ENCODE measurements at regions of chr9 and their contacts with region 1.

Region 1: DNA sequence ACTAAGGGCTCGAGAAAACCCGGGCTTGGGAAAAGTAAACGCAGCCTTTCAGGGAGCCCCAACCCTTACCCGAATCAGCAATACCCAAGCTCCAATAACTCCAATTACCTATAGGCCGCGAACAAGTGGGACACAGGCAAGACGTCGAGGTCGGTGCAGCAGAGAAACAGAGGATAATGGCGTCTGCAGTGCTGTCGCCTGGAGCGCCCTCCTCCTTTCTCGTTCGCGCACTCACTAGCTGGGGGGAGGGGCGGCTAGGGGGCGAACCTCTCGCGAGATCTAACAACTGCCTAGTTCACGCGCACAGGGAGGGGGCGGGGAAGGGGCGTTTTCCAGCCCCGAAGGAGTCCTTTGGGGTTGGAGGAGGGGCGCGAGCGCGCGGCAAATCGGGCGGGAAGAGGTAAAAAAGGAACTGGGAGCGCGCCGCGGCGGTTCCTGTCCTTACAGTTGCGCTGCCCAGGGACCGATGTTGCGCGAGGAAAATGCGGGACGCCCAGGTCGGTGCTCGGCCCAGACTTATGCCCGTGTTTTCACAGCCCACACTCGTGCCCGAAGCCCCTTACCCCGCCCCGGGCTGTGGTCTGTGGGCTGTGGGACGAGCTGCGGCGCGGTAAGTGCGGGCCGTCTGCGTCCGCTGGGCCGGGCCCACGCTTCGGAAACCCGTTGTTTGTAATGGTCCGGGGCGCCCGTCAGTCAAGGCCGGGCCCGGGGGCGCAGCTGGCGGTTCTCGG is at the start of gene RMI1:
- DNase-seq: peak; percentile 95 to 99 (median 98)
- ATAC-seq: peak; percentile 88
- H3K4me3 ChIP-seq: peak within 1 kb of the TSS; percentile 93
- H3K4me3 Mint-ChIP-seq: peak within 1 kb of the TSS; percentile 91 to 100 (median 99)
- H3K27ac ChIP-seq: peak within 1 kb of the TSS; percentile 99
- H3K27ac Mint-ChIP-seq: peak within 1 kb of the TSS; percentile 97 to 100 (median 99)
- H3K4me1 ChIP-seq: peaks cover 21 to 27% of the 10 kb centered on the region in 2 donors
- H3K4me1 Mint-ChIP-seq: peaks cover 28 to 52% (median 46%) of the 10 kb centered on the region in 7 donors
- H3K27me3 ChIP-seq: no peaks in the 10 kb centered on the region
- H3K27me3 Mint-ChIP-seq: no peaks in the 10 kb centered on the region
- total RNA-seq, gene RMI1: 1.6 to 24.8 (median 5.2) TPM

Region 2: DNA sequence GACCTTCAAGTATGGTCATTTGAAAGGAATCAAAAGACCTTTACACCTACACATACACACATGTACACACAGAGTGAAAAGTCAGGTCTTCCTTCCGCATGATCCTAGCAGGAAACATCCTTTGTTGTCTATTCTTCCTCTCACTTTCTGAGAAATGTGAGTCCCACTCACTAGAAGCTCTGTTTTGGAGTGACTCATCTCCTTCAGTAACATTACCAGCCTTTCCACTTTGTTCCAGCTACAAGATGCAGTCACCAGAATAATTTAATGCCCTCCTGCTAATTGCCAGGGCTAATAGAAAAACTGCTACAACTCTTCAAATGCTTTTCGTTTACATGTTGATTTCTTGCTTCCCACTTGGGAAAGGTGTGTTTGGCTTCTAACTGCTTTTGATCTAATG is 1335.0 kb before region 1 on chr9:
- CTCF ChIA-PET with region 1: no interaction called
- POLR2A ChIA-PET with region 1: no interaction called
- intact Hi-C with region 1: no loop called
- DNase-seq: no peak
- ATAC-seq: no peak
- H3K4me3 ChIP-seq: no peak overlapping the region
- H3K4me3 Mint-ChIP-seq: no peak overlapping the region
- H3K27ac ChIP-seq: no peak overlapping the region
- H3K27ac Mint-ChIP-seq: no peak overlapping the region
- H3K4me1 ChIP-seq: no peaks in the 10 kb centered on the region
- H3K4me1 Mint-ChIP-seq: peaks cover 0 to 1% (median 0%) of the 10 kb centered on the region in 7 donors
- H3K27me3 ChIP-seq: no peaks in the 10 kb centered on the region
- H3K27me3 Mint-ChIP-seq: no peaks in the 10 kb centered on the region

Region 3: GRCh38 chr9:83707768-83708514 is 272.6 kb before region 1 on chr9 and contains the start of gene UBQLN1:
- CTCF ChIA-PET with region 1: no interaction called
- POLR2A ChIA-PET with region 1: interaction called, 34 read pairs
- intact Hi-C with region 1: loop called (anchors 1 kb)
- DNase-seq: peak; percentile 91 to 97 (median 95)
- ATAC-seq: peak; percentile 91
- H3K4me3 ChIP-seq: peak within 1 kb of the TSS; percentile 79
- H3K4me3 Mint-ChIP-seq: peak within 1 kb of the TSS; percentile 81 to 99 (median 87)
- H3K27ac ChIP-seq: peak within 1 kb of the TSS; percentile 93
- H3K27ac Mint-ChIP-seq: peak within 1 kb of the TSS; percentile 95 to 100 (median 100)
- H3K4me1 ChIP-seq: peaks cover 27% of the 10 kb centered on the region in 2 donors
- H3K4me1 Mint-ChIP-seq: peaks cover 30 to 55% (median 49%) of the 10 kb centered on the region in 7 donors
- H3K27me3 ChIP-seq: no peaks in the 10 kb centered on the region
- H3K27me3 Mint-ChIP-seq: peaks cover 0 to 6% (median 0%) of the 10 kb centered on the region in 5 donors
- total RNA-seq, gene UBQLN1: 104 to 139 (median 114) TPM

Region 4: GRCh38 chr9:83956434-83957247 is 23.9 kb before region 1 on chr9:
- CTCF ChIA-PET with region 1: interaction called, 4 read pairs
- POLR2A ChIA-PET with region 1: interaction called, 35 read pairs
- intact Hi-C with region 1: loop called (anchors 1 kb)
- DNase-seq: peak; percentile 25 to 73 (median 42)
- ATAC-seq: peak; percentile 76
- H3K4me3 ChIP-seq: peak overlapping the region; percentile 88
- H3K4me3 Mint-ChIP-seq: peak overlapping the region; percentile 94 to 98 (median 95)
- H3K27ac ChIP-seq: peak overlapping the region; percentile 77
- H3K27ac Mint-ChIP-seq: peak overlapping the region; percentile 88 to 99 (median 94)
- H3K4me1 ChIP-seq: peaks cover 4 to 13% of the 10 kb centered on the region in 2 donors
- H3K4me1 Mint-ChIP-seq: peaks cover 6 to 23% (median 19%) of the 10 kb centered on the region in 7 donors
- H3K27me3 ChIP-seq: no peaks in the 10 kb centered on the region
- H3K27me3 Mint-ChIP-seq: no peaks in the 10 kb centered on the region

Region 5: DNA sequence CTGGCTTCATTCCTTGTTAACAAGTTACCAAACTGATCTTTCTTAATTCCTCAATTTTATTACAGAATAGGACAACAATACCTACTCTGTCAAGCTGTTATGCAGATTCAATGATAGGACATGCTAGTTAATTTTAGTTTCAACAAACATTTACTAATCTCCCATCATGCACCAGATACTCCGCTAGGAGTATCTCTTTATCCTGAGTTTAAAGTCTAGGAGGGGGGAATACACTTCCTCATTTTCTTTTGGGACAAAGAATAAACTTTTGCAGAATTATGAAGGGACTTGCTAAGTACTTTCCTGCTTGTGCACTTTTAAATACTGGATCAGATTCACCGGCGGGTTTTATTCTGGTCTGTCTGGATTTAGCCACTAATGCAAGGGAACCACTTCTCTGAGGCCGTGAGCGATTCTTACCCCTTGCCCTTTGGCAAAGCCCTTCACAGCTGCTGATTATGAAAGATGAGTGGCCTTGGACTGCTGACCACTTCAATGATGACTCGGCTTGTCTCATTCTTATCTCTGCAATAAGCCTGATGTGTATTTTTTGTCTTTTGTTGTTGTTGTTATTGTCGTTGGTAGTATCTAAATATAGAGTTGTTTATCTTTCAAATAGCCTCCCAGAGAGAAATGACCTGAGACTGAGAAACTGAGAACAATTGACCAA is 73.9 kb after region 1 on chr9:
- CTCF ChIA-PET with region 1: no interaction called
- POLR2A ChIA-PET with region 1: no interaction called
- intact Hi-C with region 1: loop called in 1 of 2 experiments (anchors 10 kb)
- DNase-seq: no peak
- ATAC-seq: no peak
- H3K4me3 ChIP-seq: no peak overlapping the region
- H3K4me3 Mint-ChIP-seq: no peak overlapping the region
- H3K27ac ChIP-seq: no peak overlapping the region
- H3K27ac Mint-ChIP-seq: no peak overlapping the region
- H3K4me1 ChIP-seq: no peaks in the 10 kb centered on the region
- H3K4me1 Mint-ChIP-seq: peaks cover 0 to 5% (median 0%) of the 10 kb centered on the region in 7 donors
- H3K27me3 ChIP-seq: no peaks in the 10 kb centered on the region
- H3K27me3 Mint-ChIP-seq: peaks cover 0 to 14% (median 8%) of the 10 kb centered on the region in 5 donors

Region 6: GRCh38 chr9:84187090-84187489 is 206.5 kb after region 1 on chr9:
- CTCF ChIA-PET with region 1: no interaction called
- POLR2A ChIA-PET with region 1: no interaction called
- intact Hi-C with region 1: no loop called
- DNase-seq: no peak
- ATAC-seq: no peak
- H3K4me3 ChIP-seq: no peak overlapping the region
- H3K4me3 Mint-ChIP-seq: no peak overlapping the region
- H3K27ac ChIP-seq: no peak overlapping the region
- H3K27ac Mint-ChIP-seq: no peak overlapping the region
- H3K4me1 ChIP-seq: no peaks in the 10 kb centered on the region
- H3K4me1 Mint-ChIP-seq: no peaks in the 10 kb centered on the region
- H3K27me3 ChIP-seq: no peaks in the 10 kb centered on the region
- H3K27me3 Mint-ChIP-seq: peaks cover 0 to 11% (median 6%) of the 10 kb centered on the region in 5 donors

Region 7: DNA sequence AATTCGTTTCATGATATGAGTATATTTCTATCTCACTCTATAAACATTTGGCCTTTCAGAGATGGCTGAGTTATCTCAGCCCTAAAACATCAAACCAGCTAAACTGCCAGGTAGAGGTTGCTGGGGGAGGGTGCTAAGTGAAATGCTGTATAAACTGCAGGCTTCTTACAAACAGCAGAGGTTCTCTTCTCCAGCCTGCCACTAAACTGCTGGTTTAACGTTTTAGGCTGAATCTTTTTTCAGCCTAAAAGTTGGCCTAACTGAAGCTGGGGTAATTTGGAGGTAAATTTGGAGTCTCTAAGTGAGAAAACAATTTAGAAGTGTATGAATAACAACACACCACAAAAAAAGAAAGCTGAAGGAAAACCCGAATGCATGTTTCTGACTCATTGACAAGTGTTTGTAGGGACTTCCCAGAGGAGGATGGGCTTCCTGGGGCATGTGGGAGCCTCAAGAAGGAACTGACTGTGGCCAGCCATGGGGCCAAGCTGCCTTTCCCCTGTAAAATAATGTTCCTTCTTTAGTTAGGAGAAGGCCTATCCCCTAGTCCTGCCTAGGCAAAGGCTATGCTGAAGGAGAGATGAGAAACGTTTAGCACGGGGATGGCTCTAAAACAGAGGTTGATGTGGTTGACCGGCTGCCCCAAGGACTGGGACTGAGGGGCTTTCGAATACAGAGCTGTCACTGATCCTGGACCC is 315.7 kb after region 1 on chr9:
- CTCF ChIA-PET with region 1: no interaction called
- POLR2A ChIA-PET with region 1: interaction called, 11 read pairs
- intact Hi-C with region 1: loop called in 1 of 2 experiments (anchors 1 kb)
- DNase-seq: peak in 2 of 9 donors; percentile 9 to 61
- ATAC-seq: peak; percentile 79
- H3K4me3 ChIP-seq: no peak overlapping the region
- H3K4me3 Mint-ChIP-seq: peak overlapping the region in 6 of 10 donors; percentile 5 to 71 (median 44)
- H3K27ac ChIP-seq: peak overlapping the region; percentile 6
- H3K27ac Mint-ChIP-seq: peak overlapping the region; percentile 54 to 100 (median 79)
- H3K4me1 ChIP-seq: peaks cover 8 to 32% of the 10 kb centered on the region in 2 donors
- H3K4me1 Mint-ChIP-seq: peaks cover 19 to 74% (median 48%) of the 10 kb centered on the region in 7 donors
- H3K27me3 ChIP-seq: no peaks in the 10 kb centered on the region
- H3K27me3 Mint-ChIP-seq: no peaks in the 10 kb centered on the region

Region 8: DNA sequence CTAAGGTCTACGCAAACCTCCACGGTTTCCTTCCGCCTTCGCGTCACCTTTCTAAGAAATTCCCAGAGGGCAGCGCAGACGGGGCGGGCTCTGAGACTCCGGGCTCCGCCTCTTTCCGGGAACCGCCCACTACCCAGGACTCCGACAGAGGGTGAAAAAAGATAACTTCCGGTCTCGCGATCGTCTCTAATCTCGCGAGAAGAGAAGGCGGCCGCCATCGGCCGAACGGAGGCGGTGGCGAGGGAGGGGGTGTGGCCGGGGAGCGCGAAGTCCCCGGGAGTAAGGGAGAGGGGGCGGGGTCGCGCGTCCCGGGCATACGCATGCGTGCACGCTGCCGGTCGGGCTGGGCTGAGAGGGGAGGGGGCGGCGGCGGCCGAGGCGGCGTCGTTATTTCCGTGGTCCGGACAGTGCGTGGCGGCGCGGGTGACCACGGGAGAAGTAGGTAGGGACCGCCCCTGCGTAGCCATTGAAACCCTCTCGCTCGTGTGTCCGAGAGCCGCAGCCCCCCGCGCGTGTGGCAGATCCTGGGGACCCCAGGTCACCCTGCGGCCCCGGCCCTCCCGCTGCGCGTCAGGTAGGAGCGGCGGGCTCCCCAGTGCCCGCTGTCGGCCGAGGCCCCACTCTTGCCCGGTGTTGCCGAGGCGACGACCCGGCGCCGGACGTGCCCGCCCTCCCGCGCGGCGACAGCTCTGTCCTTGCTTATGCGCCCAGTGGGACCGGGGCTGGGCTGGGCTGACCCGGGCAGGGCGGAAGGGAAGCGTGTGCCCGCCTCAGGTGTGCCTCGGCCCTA is 1960.5 kb after region 1 on chr9 and contains the start of gene NAA35:
- CTCF ChIA-PET with region 1: no interaction called
- POLR2A ChIA-PET with region 1: interaction called, 5 read pairs
- intact Hi-C with region 1: loop called in 1 of 2 experiments (anchors 1 kb)
- DNase-seq: peak; percentile 95 to 99 (median 99)
- ATAC-seq: peak; percentile 94
- H3K4me3 ChIP-seq: peak within 1 kb of the TSS; percentile 75
- H3K4me3 Mint-ChIP-seq: peak within 1 kb of the TSS in 6 of 10 donors; percentile 83 to 95 (median 90)
- H3K27ac ChIP-seq: peak within 1 kb of the TSS; percentile 96
- H3K27ac Mint-ChIP-seq: peak within 1 kb of the TSS in 8 of 9 donors; percentile 90 to 97 (median 95)
- H3K4me1 ChIP-seq: peaks cover 25 to 26% of the 10 kb centered on the region in 2 donors
- H3K4me1 Mint-ChIP-seq: peaks cover 0 to 21% (median 12%) of the 10 kb centered on the region in 7 donors
- H3K27me3 ChIP-seq: no peaks in the 10 kb centered on the region
- H3K27me3 Mint-ChIP-seq: peaks cover 0 to 3% (median 0%) of the 10 kb centered on the region in 5 donors
- total RNA-seq, gene NAA35: 18.2 to 28.6 (median 26.0) TPM

Measured in naive thymus-derived CD4-positive, alpha-beta T cell (primary cell).